Caco-2 (cell line): ENCODE measurements at regions of chr17 and their contacts with region 1.

Region 1: DNA sequence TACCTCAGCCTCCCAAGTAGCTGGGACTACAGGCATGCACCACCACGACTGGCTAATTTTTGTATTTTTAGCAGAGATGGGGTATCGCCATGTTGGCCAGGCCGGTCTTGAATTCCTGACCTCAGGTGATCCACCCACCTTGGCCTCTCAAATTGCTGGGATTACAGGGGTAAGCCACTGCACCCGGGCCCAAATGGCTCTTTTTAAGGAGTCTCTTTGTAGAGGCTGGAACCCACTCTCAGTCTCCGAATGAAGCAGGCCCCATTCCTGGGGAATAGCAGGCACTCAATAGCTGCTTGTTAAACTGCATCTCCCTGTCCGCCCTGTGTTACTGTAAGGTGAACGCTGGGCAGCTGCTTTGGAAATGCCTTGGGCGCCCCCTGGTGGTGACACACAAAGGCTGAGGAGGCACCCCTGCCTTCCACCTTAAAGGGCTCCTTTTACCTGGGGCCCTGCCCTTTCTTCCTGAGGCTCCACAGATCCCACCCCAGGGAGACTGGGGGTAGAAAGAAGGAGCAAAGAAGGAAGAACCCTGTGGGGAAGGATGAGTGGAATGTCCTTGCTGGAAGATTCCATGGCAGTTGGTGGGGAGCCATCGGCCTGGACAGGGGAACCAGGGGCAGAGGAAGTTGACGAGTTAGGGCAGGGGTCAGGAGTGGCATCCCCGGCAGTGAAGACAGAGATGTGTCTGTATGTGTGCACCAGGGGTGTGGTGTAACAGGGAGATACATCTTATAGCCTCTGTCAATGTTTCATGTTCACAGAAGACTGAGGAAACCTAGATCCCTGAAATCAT is 6.1 kb upstream of the SP2 start:
- DNase-seq: peak; percentile 97 to 99
- H3K4me3 ChIP-seq: no peak overlapping the region
- H3K4me3 Mint-ChIP-seq: no peak overlapping the region
- H3K27ac Mint-ChIP-seq: no peak overlapping the region
- H3K4me1 ChIP-seq: peaks cover 23% of the 10 kb centered on the region
- H3K4me1 Mint-ChIP-seq: peaks cover 31% of the 10 kb centered on the region
- H3K27me3 ChIP-seq: no peaks in the 10 kb centered on the region
- H3K27me3 Mint-ChIP-seq: no peaks in the 10 kb centered on the region
- CTCF ChIP-seq: peak; percentile 100

Region 2: GRCh38 chr17:47427985-47428384 is 461.9 kb before region 1 on chr17:
- CTCF ChIA-PET with region 1: no interaction called
- POLR2A ChIA-PET with region 1: no interaction called
- intact Hi-C with region 1: no loop called
- DNase-seq: no peak
- H3K4me3 ChIP-seq: no peak overlapping the region
- H3K4me3 Mint-ChIP-seq: no peak overlapping the region
- H3K27ac Mint-ChIP-seq: no peak overlapping the region
- H3K4me1 ChIP-seq: peaks cover 8% of the 10 kb centered on the region
- H3K4me1 Mint-ChIP-seq: no peaks in the 10 kb centered on the region
- H3K27me3 ChIP-seq: no peaks in the 10 kb centered on the region
- H3K27me3 Mint-ChIP-seq: no peaks in the 10 kb centered on the region
- CTCF ChIP-seq: no peak

Region 3: DNA sequence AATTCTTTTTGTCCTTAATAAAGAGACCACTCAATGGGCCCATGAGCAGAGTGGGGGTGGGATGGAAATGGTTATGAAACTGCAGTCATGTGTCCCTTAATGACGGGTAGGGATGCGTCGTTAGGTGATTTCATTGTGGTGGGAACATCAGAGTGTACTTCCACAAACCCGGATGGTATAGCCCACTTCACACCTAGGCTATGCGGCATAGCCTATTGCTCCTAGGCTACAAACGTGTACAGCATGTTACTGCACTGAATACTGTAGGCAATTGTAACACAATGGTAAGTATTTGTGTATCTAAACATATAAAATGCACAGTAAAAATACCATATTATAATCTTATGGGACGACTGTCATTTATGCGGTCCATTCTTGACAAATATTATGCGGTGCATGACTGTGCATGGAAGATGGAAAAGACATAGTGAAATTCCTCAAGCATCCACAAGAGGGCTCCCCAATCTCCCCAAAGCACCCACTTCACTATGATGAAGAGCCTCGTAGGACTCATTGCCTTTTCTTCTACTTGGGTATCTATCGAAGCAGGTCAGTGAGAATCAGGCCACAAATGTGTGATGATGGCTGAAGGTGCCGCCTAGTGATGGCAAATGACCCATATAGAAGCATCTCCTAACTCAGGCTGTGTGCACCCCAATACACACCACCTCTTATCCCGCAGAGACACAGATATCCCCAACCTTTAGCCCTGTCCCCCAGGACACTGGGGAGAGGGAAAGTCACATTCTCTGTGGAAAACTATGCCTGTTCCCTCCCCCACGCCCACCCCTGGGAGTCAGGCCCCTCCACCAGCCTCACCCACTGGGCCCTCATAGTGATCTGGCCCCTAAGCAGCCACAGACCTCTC is 113.4 kb before region 1 on chr17:
- CTCF ChIA-PET with region 1: interaction called, 4 read pairs
- POLR2A ChIA-PET with region 1: no interaction called
- intact Hi-C with region 1: loop called (anchors 1 kb)
- DNase-seq: peak; percentile 60 to 79
- H3K4me3 ChIP-seq: no peak overlapping the region
- H3K4me3 Mint-ChIP-seq: no peak overlapping the region
- H3K27ac Mint-ChIP-seq: no peak overlapping the region
- H3K4me1 ChIP-seq: no peaks in the 10 kb centered on the region
- H3K4me1 Mint-ChIP-seq: no peaks in the 10 kb centered on the region
- H3K27me3 ChIP-seq: no peaks in the 10 kb centered on the region
- H3K27me3 Mint-ChIP-seq: peaks cover 28% of the 10 kb centered on the region
- CTCF ChIP-seq: peak; percentile 94 to 99

Region 4: GRCh38 chr17:47821424-47822391 is 68.2 kb before region 1 on chr17 and contains the start of gene OSBPL7:
- CTCF ChIA-PET with region 1: interaction called, 17 read pairs
- POLR2A ChIA-PET with region 1: interaction called, 14 read pairs
- intact Hi-C with region 1: no loop called
- DNase-seq: peak; percentile 92 to 95
- H3K4me3 ChIP-seq: peak within 1 kb of the TSS; percentile 75
- H3K4me3 Mint-ChIP-seq: peak within 1 kb of the TSS; percentile 98
- H3K27ac Mint-ChIP-seq: peak within 1 kb of the TSS; percentile 92
- H3K4me1 ChIP-seq: peaks cover 9% of the 10 kb centered on the region
- H3K4me1 Mint-ChIP-seq: peaks cover 18% of the 10 kb centered on the region
- H3K27me3 ChIP-seq: no peaks in the 10 kb centered on the region
- H3K27me3 Mint-ChIP-seq: no peaks in the 10 kb centered on the region
- CTCF ChIP-seq: peak in 1 of 2 experiments; percentile 86
- total RNA-seq, gene OSBPL7: 46.8 and 48.3 TPM in 2 replicates

Region 5: GRCh38 chr17:47850692-47851573 is 39.0 kb before region 1 on chr17 and contains the start of gene SP6:
- CTCF ChIA-PET with region 1: interaction called, 904 read pairs
- POLR2A ChIA-PET with region 1: interaction called, 25 read pairs
- intact Hi-C with region 1: no loop called
- DNase-seq: peak; percentile 98 to 99
- H3K4me3 ChIP-seq: peak within 1 kb of the TSS; percentile 56
- H3K4me3 Mint-ChIP-seq: peak within 1 kb of the TSS; percentile 90
- H3K27ac Mint-ChIP-seq: peak within 1 kb of the TSS; percentile 77
- H3K4me1 ChIP-seq: peaks cover 12% of the 10 kb centered on the region
- H3K4me1 Mint-ChIP-seq: peaks cover 23% of the 10 kb centered on the region
- H3K27me3 ChIP-seq: no peaks in the 10 kb centered on the region
- H3K27me3 Mint-ChIP-seq: peaks cover 12% of the 10 kb centered on the region
- CTCF ChIP-seq: peak; percentile 31 to 57
- total RNA-seq, gene SP6: 20.6 and 25.0 TPM in 2 replicates

Region 6: GRCh38 chr17:47862621-47863440 is 27.1 kb before region 1 on chr17:
- CTCF ChIA-PET with region 1: interaction called, 12 read pairs
- POLR2A ChIA-PET with region 1: interaction called, 5 read pairs
- intact Hi-C with region 1: no loop called
- DNase-seq: no peak
- H3K4me3 ChIP-seq: no peak overlapping the region
- H3K4me3 Mint-ChIP-seq: no peak overlapping the region
- H3K27ac Mint-ChIP-seq: peak overlapping the region; percentile 2
- H3K4me1 ChIP-seq: peaks cover 26% of the 10 kb centered on the region
- H3K4me1 Mint-ChIP-seq: peaks cover 16% of the 10 kb centered on the region
- H3K27me3 ChIP-seq: no peaks in the 10 kb centered on the region
- H3K27me3 Mint-ChIP-seq: no peaks in the 10 kb centered on the region
- CTCF ChIP-seq: no peak

Region 7: GRCh38 chr17:47872021-47872650 is 17.8 kb before region 1 on chr17:
- CTCF ChIA-PET with region 1: interaction called, 5 read pairs
- POLR2A ChIA-PET with region 1: no interaction called
- intact Hi-C with region 1: loop called (anchors 2 kb)
- DNase-seq: no peak
- H3K4me3 ChIP-seq: no peak overlapping the region
- H3K4me3 Mint-ChIP-seq: no peak overlapping the region
- H3K27ac Mint-ChIP-seq: no peak overlapping the region
- H3K4me1 ChIP-seq: peaks cover 48% of the 10 kb centered on the region
- H3K4me1 Mint-ChIP-seq: peaks cover 15% of the 10 kb centered on the region
- H3K27me3 ChIP-seq: no peaks in the 10 kb centered on the region; the same call in 1 of the 2 replicates
- H3K27me3 Mint-ChIP-seq: no peaks in the 10 kb centered on the region
- CTCF ChIP-seq: no peak